ENCODE measurements at regions of chr19 and their contacts with region 1.

Region 1: GRCh38 chr19:44002566-44003460 is at the start of gene ZNF230:
- DNase-seq: peak; percentile 96
- H3K4me3 ChIP-seq: peak within 1 kb of the TSS; percentile 57 to 85 (median 69)
- H3K27ac ChIP-seq: peak within 1 kb of the TSS; percentile 69 to 81 (median 80)
- H3K4me1 ChIP-seq: peaks cover 0 to 19% (median 12%) of the 10 kb centered on the region in 4 donors
- H3K27me3 ChIP-seq: no peaks in the 10 kb centered on the region
- CTCF ChIP-seq: peak in 1 of 4 experiments; percentile 14
- EP300 ChIP-seq: peak in 1 of 4 donors; percentile 10
- POLR2A ChIP-seq: peak in 1 of 2 donors; percentile 26
- total RNA-seq, gene ZNF230: 3.0 to 10.6 (median 5.1) TPM

Region 2: GRCh38 chr19:43934985-43935708 is 67.7 kb before region 1 on chr19 and contains the start of gene ZNF45:
- intact Hi-C with region 1: loop called (anchors 5 kb)
- DNase-seq: peak; percentile 92
- H3K4me3 ChIP-seq: peak within 1 kb of the TSS; percentile 50 to 68 (median 65)
- H3K27ac ChIP-seq: peak within 1 kb of the TSS; percentile 86 to 89 (median 88)
- H3K4me1 ChIP-seq: peaks cover 0 to 21% (median 9%) of the 10 kb centered on the region in 4 donors
- H3K27me3 ChIP-seq: no peaks in the 10 kb centered on the region
- CTCF ChIP-seq: no peak
- EP300 ChIP-seq: no peak
- POLR2A ChIP-seq: peak in 1 of 2 donors; percentile 17
- total RNA-seq, gene ZNF45: 5.5 to 18.2 (median 13.2) TPM

Region 3: GRCh38 chr19:43950834-43951645 is 51.8 kb before region 1 on chr19 and contains the start of gene ZNF221:
- intact Hi-C with region 1: loop called (anchors 2 kb)
- DNase-seq: peak; percentile 96
- H3K4me3 ChIP-seq: peak within 1 kb of the TSS; percentile 47 to 77 (median 63)
- H3K27ac ChIP-seq: peak within 1 kb of the TSS; percentile 76 to 83 (median 80)
- H3K4me1 ChIP-seq: no peaks in the 10 kb centered on the region
- H3K27me3 ChIP-seq: peaks cover 0 to 3% (median 0%) of the 10 kb centered on the region in 3 donors
- CTCF ChIP-seq: peak in 3 of 4 experiments; percentile 33 to 47 (median 42)
- EP300 ChIP-seq: no peak
- POLR2A ChIP-seq: no peak
- total RNA-seq, gene ZNF221: 2.9 to 6.8 (median 4.8) TPM

Region 4: GRCh38 chr19:43983912-43984686 is 18.7 kb before region 1 on chr19 and contains the start of gene ZNF155:
- intact Hi-C with region 1: loop called (anchors 2 kb)
- DNase-seq: peak; percentile 97
- H3K4me3 ChIP-seq: peak within 1 kb of the TSS; percentile 67 to 80 (median 72)
- H3K27ac ChIP-seq: peak within 1 kb of the TSS; percentile 78 to 83 (median 83)
- H3K4me1 ChIP-seq: peaks cover 0 to 16% (median 6%) of the 10 kb centered on the region in 4 donors
- H3K27me3 ChIP-seq: no peaks in the 10 kb centered on the region
- CTCF ChIP-seq: no peak
- EP300 ChIP-seq: no peak
- POLR2A ChIP-seq: no peak
- total RNA-seq, gene ZNF155: 5.5 to 8.2 (median 7.5) TPM

Region 5: DNA sequence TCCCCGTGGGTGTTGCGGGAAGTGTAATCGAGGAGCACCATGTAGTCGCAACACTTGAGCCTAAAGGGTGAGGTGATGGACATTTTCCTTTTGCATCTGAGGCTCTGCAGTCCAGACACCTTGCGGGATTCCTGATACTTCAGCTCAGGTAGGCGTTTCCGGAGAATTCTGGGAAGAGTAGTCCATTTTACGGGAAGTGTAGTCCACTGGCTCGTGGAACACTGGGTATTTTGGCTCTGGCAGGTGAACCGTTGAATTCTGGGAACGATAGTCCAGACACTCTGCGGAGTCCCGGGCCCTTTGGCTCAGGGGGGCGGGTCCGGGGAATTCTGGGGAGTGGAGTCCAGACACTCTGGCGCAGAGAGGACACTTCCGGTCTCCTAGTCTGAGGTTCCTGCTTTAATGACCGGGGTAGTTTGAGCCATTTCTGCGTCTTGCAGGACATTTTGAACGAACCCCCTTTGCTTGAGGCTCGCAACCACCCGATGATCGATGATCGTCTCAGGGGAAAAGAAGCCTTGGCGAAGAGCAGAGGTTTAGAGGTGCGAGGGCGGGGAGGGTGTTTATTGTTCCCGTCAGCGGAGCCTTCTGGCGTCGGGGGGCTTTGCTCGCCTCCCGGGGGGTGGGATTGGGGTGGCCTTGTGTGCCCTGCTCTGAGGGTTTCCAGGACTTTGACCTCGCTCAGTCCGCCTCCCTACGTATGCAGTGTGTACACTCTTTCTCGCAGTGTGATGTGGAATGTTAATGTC is 49.0 kb after region 1 on chr19 and contains the start of gene ZNF223:
- intact Hi-C with region 1: loop called (anchors 1 kb)
- DNase-seq: peak; percentile 97
- H3K4me3 ChIP-seq: peak within 1 kb of the TSS; percentile 58 to 81 (median 68)
- H3K27ac ChIP-seq: peak within 1 kb of the TSS; percentile 73 to 78 (median 77)
- H3K4me1 ChIP-seq: peaks cover 0 to 17% (median 13%) of the 10 kb centered on the region in 4 donors
- H3K27me3 ChIP-seq: peaks cover 0 to 7% (median 0%) of the 10 kb centered on the region in 3 donors
- CTCF ChIP-seq: no peak
- EP300 ChIP-seq: peak in 1 of 4 donors; percentile 28
- POLR2A ChIP-seq: no peak
- total RNA-seq, gene ZNF223: 2.5 to 5.0 (median 4.2) TPM

Region 6: GRCh38 chr19:44093931-44094765 is 91.3 kb after region 1 on chr19 and contains the start of gene ZNF224:
- intact Hi-C with region 1: loop called (anchors 1 kb)
- DNase-seq: peak; percentile 94
- H3K4me3 ChIP-seq: peak within 1 kb of the TSS; percentile 69 to 83 (median 76)
- H3K27ac ChIP-seq: peak within 1 kb of the TSS; percentile 80 to 81 (median 81)
- H3K4me1 ChIP-seq: peaks cover 0 to 13% (median 10%) of the 10 kb centered on the region in 4 donors
- H3K27me3 ChIP-seq: no peaks in the 10 kb centered on the region
- CTCF ChIP-seq: no peak
- EP300 ChIP-seq: no peak
- POLR2A ChIP-seq: no peak
- total RNA-seq, gene ZNF224: 16.6 to 23.0 (median 19.6) TPM